ENCODE measurements at regions of chr6 and their contacts with region 1.

Region 1: DNA sequence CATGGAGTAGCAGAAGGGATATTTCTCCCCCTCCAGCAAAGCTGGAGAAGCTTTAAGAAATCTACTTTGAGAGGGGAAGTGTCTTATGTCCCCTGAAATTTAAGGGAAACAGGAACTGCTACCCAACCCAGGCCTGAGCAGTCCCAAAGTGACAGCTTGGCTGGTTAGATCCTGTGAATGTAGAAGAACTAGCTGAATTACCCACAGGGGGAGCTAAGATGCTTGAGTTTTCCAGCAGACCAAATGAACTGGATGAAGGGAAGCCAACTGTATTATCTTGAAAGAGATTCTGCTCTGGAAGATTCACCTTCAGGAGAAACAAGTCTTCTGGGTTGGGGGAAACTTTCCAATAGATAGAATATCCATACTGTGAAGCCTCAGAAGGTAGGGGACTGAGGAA is 303.3 kb upstream of the MMS22L start:
- DNase-seq: no peak
- H3K4me3 ChIP-seq: no peak overlapping the region
- H3K27ac ChIP-seq: no peak overlapping the region
- H3K27me3 ChIP-seq: no peaks in the 10 kb centered on the region
- CTCF ChIP-seq: peak in 45 of 56 donors; percentile 16 to 56 (median 38)

Region 2: GRCh38 chr6:96075826-96076225 is 1510.5 kb before region 1 on chr6:
- intact Hi-C with region 1: no loop called
- DNase-seq: no peak
- H3K4me3 ChIP-seq: no peak overlapping the region
- H3K27ac ChIP-seq: peak overlapping the region in 37 of 59 donors; percentile 1 to 70 (median 38)
- H3K27me3 ChIP-seq: no peaks in the 10 kb centered on the region
- CTCF ChIP-seq: no peak

Region 3: GRCh38 chr6:97497713-97498331 is 88.5 kb before region 1 on chr6:
- intact Hi-C with region 1: loop called in 1 of 2 experiments (anchors 10 kb)
- DNase-seq: peak; percentile 48 to 91 (median 81)
- H3K4me3 ChIP-seq: peak overlapping the region in 3 of 59 donors; percentile 9 to 27 (median 15)
- H3K27ac ChIP-seq: peak overlapping the region in 46 of 59 donors; percentile 5 to 79 (median 48)
- H3K27me3 ChIP-seq: no peaks in the 10 kb centered on the region
- CTCF ChIP-seq: peak; percentile 64 to 96 (median 84)

Region 4: DNA sequence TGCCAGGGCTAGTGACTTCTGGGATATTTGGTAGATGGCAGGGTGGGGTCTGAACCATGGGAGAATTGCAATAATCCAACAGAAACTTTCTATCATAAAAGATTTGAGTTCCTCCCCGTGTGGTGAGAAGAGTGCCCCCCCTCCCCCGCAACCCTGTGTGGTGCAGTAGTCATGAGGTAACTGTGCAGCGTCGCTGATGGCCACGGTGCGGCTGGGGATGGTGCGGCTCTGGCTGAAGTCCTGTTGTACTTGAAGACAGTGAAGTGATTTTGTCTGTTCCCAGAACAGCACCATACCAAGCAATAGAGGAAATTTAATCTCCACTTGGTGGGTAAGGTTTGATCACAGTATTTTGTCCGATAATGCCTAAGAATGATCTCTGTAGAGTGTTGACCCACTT is 593.3 kb after region 1 on chr6:
- intact Hi-C with region 1: no loop called
- DNase-seq: no peak
- H3K4me3 ChIP-seq: no peak overlapping the region
- H3K27ac ChIP-seq: no peak overlapping the region
- H3K27me3 ChIP-seq: no peaks in the 10 kb centered on the region
- CTCF ChIP-seq: no peak

Measured in dorsolateral prefrontal cortex (tissue), 120 donors.